AG04450 (cell line): ENCODE measurements at regions of chr20 and their contacts with region 1.

Region 1: GRCh38 chr20:8722276-8722928 is 346.5 kb upstream of the PLCB4 start:
- DNase-seq: peak; percentile 65
- H3K4me3 ChIP-seq: no peak overlapping the region
- H3K27ac ChIP-seq: no peak overlapping the region
- H3K27me3 ChIP-seq: no peaks in the 10 kb centered on the region
- CTCF ChIP-seq: peak; percentile 83

Region 2: GRCh38 chr20:7940341-7940740 is 782.1 kb before region 1 on chr20 and contains the start of gene HAO1:
- CTCF ChIA-PET with region 1: interaction called, 323 read pairs
- POLR2A ChIA-PET with region 1: interaction called, 5 read pairs
- DNase-seq: no peak
- H3K4me3 ChIP-seq: no peak within 1 kb of the TSS
- H3K27ac ChIP-seq: no peak within 1 kb of the TSS
- H3K27me3 ChIP-seq: no peaks in the 10 kb centered on the region
- CTCF ChIP-seq: no peak
- polyA plus RNA-seq, gene HAO1: not detected in 2 replicates

Region 3: DNA sequence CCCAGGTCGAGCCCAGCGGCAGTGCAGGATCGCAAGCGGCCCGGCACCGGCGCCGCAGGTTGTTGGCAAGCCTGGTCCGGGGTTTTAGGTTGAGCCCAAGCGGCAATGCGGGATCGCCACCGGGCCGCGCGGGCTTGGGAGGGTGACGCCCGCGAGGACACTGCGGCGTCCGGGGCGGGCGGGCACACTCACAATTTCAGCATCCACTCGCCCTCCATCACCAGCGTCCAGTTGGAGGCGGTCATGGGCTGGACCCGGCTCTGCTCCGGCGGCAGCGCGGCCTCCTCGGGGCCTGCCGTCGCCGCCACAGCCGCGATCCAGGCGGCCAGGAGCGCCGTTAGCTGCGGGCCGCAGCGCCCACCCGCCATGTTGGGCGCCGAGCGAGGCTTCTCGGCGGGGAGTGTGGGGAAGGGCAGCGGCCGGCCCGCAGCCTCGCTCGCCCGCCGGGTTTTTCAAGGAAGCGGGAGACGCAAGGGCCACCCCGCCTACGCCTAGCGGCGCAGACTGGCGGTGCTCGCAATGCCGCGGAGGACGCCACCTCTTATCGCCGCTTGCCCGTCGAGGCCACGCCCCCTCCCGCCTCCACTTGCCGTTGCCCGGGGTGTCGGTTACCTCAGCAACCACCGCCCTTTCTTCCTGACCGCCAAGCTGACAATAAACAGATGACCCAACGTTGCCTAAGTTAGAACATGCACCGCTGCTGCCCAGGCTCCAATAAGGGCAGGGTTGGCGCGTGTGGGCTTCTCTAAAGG is 703.0 kb before region 1 on chr20 and contains the start of gene TMX4:
- CTCF ChIA-PET with region 1: interaction called, 21 read pairs
- POLR2A ChIA-PET with region 1: no interaction called
- DNase-seq: peak; percentile 82
- H3K4me3 ChIP-seq: peak within 1 kb of the TSS; percentile 81
- H3K27ac ChIP-seq: peak within 1 kb of the TSS; percentile 12
- H3K27me3 ChIP-seq: no peaks in the 10 kb centered on the region
- CTCF ChIP-seq: peak; percentile 6; the same call in 1 of the 2 replicates
- polyA plus RNA-seq, gene TMX4: 12.8 and 15.6 TPM in 2 replicates

Region 4: GRCh38 chr20:8124641-8125040 is 597.8 kb before region 1 on chr20:
- CTCF ChIA-PET with region 1: interaction called, 65 read pairs
- POLR2A ChIA-PET with region 1: no interaction called
- DNase-seq: no peak
- H3K4me3 ChIP-seq: no peak overlapping the region
- H3K27ac ChIP-seq: no peak overlapping the region
- H3K27me3 ChIP-seq: no peaks in the 10 kb centered on the region
- CTCF ChIP-seq: no peak

Region 5: GRCh38 chr20:8389381-8390036 is 332.9 kb before region 1 on chr20:
- CTCF ChIA-PET with region 1: interaction called, 100 read pairs
- POLR2A ChIA-PET with region 1: no interaction called
- DNase-seq: peak; percentile 32
- H3K4me3 ChIP-seq: no peak overlapping the region
- H3K27ac ChIP-seq: no peak overlapping the region
- H3K27me3 ChIP-seq: no peaks in the 10 kb centered on the region
- CTCF ChIP-seq: peak; percentile 46

Region 6: DNA sequence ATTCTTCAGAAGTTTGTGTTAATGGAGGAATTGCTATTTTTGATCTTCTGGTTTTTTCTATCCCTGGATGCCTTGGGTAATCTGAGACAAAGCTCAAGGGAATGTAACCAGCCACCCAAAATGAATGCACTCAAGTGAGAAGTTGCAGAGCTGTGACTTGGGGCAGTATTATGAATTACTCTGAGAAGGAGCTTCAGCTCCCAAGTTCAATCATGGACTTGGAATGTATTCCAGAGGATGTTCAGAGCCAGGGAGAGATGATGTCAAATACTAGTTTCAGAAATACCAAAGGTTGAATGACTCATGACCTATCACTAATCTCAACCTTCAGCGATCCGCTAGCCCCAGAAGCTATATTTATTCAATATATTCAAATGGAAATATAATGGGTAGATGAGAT is 28.7 kb before region 1 on chr20:
- CTCF ChIA-PET with region 1: interaction called, 18 read pairs
- POLR2A ChIA-PET with region 1: no interaction called
- DNase-seq: peak; percentile 64
- H3K4me3 ChIP-seq: no peak overlapping the region
- H3K27ac ChIP-seq: no peak overlapping the region
- H3K27me3 ChIP-seq: no peaks in the 10 kb centered on the region
- CTCF ChIP-seq: no peak

Region 7: DNA sequence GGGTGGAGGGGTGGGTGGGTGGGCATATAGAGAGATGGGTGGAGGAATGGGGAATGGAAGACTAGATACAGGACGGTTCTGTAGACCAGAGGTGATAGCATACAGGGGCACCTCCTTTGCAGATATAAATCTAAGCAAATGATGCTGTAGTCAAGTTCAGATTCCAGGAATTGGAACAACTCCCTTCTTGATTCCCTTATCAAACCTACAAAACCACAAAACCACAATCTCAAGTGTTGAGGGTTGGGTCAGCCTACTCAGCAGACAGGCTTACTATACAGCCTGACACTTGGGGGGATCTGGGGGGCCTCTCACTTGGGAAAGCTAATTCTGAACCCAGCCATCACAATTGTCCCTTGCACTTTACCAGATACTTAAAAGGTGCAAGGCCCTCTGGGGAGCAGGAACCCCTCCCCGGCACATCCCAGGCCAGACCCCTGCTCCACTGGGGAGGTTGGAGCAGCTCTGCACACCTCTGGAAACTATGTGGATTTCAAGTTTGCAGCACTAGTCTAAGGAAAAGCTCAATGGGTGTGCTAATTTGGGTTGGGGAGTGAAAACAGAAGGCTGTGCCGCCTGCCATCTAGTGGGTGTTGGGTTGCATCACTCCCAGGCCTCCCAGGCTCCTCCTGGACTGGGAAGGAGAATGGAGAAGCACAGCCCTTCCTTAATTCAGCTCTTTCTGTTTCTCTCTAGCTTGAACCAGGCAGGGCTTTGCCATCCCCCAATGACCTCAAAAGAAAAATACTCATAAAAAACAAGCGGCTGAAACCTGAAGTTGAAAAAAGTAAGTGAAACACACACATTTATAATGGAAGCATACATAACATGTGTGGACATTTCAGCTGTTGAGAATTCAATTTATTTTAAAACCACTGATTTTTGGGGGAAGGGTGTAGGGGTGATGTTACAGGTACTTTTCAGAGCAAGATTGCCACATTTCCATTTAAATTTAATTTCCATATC is 670.8 kb after region 1 on chr20:
- CTCF ChIA-PET with region 1: interaction called, 11 read pairs
- POLR2A ChIA-PET with region 1: no interaction called
- DNase-seq: no peak
- H3K4me3 ChIP-seq: no peak overlapping the region
- H3K27ac ChIP-seq: no peak overlapping the region
- H3K27me3 ChIP-seq: no peaks in the 10 kb centered on the region
- CTCF ChIP-seq: peak; percentile 92